Activated CD4-positive, alpha-beta T cell treated with anti-CD3 and anti-CD28 coated beads for 36 hours (primary cell): ENCODE measurements at regions of chr5 and their contacts with region 1.

Region 1: DNA sequence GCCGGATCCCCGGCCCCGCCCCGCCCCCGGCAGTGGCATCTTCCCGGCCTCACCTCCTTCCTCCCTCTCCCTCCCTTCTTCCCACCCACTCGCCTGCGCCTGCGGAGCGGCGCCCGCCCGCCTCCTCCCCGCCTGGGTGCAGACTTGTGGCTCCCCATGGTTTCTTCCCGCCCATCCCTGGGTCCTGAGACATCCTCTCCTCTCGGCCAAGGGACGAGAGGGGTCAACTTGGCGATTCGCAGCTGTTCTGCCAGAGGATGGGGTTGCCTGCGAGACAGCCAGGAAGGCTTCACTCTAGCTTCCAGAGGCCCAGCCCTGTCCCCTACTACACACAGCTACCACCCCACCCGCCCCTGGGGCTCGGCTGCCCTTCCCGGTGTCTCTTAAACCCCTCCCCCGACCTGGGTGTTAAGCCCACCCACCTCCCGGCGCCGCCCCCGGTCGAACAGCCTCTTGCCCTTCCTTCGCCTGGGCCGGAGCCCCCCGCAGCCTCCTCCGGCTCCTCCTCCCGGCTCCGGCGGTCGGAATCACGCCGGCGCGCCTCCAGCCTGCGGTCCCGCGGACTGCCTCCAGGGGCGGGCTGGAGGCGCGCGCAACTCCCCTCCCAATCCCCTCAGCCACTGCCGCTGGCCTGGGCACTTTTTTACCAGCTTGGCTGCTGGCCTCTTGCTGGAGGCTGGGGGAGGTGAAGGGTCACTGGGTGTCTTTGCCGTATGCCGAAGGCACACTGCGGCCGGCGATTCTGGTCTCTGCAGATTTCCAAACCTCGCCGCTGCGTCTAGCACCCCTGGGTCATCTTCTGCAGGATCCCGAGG is 1.9 kb downstream of the JADE2 start:
- DNase-seq: peak; percentile 87
- ATAC-seq: peak; percentile 51
- H3K4me3 Mint-ChIP-seq: peak overlapping the region; percentile 99
- H3K27ac Mint-ChIP-seq: peak overlapping the region; percentile 89
- H3K4me1 Mint-ChIP-seq: peaks cover 49% of the 10 kb centered on the region
- H3K27me3 Mint-ChIP-seq: no peaks in the 10 kb centered on the region

Region 2: DNA sequence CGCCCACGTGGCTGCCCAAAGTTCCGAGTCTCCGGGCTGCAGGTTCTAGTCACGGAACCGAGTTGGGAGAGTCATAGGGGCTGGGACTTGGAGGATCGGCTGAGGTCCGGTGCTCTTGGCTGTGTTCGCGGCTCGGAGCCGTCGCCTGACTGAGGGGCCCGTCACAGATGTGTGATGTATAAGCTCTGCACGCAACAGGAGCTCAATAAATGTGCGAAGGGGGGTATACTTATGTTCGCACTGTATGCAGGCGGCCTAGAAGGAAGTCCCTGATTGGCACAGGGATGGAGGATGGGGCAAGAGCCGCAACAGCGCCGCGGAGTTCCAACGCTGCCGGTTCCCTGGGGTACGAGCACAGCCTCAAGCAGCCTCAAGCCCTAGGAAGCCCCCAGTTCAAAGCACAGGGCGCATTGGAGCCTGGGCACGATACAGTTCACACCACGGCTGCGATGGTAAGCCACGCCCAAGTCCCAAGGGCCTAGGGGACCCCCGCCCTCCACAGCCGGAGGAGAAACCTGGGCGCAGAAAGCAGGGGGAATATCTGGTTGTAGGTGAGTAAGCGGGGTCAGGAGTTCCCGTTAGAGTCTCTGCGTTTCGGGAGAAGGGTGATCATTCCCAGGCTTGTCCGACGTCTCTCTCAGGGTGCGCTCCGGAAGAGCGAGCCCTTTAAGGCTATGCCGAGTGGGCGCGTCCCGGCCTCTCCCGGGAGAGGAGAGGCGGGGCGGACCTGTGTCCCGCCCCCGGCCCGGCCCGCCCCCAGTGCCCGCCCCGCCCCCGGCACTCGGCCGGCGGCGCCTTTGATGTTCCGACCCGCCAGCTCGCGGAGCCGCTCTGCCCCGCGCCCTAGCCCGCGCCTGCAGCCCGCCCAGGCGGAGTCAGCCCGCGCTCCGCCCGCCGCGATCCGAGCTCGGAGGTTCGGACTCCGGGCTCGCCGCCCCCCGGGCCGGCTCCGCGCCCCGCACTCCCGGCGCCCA is 413.2 kb before region 1 on chr5 and contains the start of gene TCF7:
- CTCF ChIA-PET with region 1: no interaction called
- POLR2A ChIA-PET with region 1: no interaction called
- intact Hi-C with region 1: loop called in 1 of 2 experiments (anchors 5 kb)
- DNase-seq: peak; percentile 88
- ATAC-seq: peak; percentile 40
- H3K4me3 Mint-ChIP-seq: peak within 1 kb of the TSS; percentile 85
- H3K27ac Mint-ChIP-seq: peak within 1 kb of the TSS; percentile 97
- H3K4me1 Mint-ChIP-seq: peaks cover 61% of the 10 kb centered on the region
- H3K27me3 Mint-ChIP-seq: no peaks in the 10 kb centered on the region
- total RNA-seq, gene TCF7: 94.8 to 117 TPM

Region 3: DNA sequence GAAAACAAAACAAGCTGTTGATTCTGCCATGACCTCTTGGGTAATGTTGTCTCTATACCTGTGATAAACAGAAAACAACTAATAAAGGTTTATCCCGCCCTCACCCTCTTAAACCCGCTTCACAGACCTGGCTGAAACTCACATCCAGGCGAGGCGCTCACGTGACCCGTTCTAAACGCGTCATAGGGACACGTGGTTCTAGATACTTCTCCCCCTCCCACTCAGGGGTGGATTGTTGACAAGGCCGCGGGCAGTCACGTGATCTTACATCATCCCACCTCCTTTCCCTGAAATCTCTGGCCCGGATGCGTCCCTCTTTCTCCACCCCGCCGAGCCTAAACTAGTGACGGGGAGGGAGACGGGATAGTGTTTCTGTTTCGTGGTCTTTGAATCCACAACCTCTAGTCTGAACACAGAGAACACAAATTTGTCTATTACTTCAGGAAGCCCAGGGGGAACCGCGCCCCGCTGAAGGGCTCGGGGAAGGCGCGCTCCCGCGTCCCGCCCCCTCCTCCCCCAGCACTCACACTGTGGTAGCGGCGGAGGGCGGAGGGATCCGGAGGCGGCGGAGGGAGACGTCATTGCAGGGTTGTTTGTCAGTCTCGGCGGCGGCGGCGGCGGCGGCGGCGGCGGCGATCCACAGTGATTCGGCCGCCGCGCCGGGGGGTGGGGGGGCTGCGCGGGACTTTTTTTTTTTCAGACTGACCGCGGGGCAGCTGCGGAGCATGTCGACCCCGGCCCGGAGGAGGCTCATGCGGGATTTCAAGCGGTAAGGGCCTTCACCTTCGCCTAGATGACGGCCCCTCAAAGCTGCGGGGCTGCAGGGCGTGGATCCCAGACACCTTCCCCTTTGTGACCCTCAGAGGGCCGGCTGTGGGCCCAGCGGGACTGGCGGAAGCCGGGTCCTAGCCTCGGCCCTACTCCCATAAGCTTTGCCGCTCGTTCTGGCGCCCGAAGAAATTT is 156.2 kb before region 1 on chr5 and contains the start of gene UBE2B:
- CTCF ChIA-PET with region 1: interaction called, 3 read pairs
- POLR2A ChIA-PET with region 1: interaction called, 4 read pairs
- intact Hi-C with region 1: loop called (anchors 1 kb)
- DNase-seq: peak; percentile 98
- ATAC-seq: peak; percentile 72
- H3K4me3 Mint-ChIP-seq: peak within 1 kb of the TSS; percentile 99
- H3K27ac Mint-ChIP-seq: peak within 1 kb of the TSS; percentile 99
- H3K4me1 Mint-ChIP-seq: peaks cover 53% of the 10 kb centered on the region
- H3K27me3 Mint-ChIP-seq: no peaks in the 10 kb centered on the region
- total RNA-seq, gene UBE2B: 112 to 115 TPM

Region 4: GRCh38 chr5:134458234-134459012 is 68.9 kb before region 1 on chr5:
- CTCF ChIA-PET with region 1: no interaction called
- POLR2A ChIA-PET with region 1: no interaction called
- intact Hi-C with region 1: no loop called
- DNase-seq: no peak
- ATAC-seq: no peak
- H3K4me3 Mint-ChIP-seq: no peak overlapping the region
- H3K27ac Mint-ChIP-seq: no peak overlapping the region
- H3K4me1 Mint-ChIP-seq: no peaks in the 10 kb centered on the region
- H3K27me3 Mint-ChIP-seq: no peaks in the 10 kb centered on the region

Region 5: DNA sequence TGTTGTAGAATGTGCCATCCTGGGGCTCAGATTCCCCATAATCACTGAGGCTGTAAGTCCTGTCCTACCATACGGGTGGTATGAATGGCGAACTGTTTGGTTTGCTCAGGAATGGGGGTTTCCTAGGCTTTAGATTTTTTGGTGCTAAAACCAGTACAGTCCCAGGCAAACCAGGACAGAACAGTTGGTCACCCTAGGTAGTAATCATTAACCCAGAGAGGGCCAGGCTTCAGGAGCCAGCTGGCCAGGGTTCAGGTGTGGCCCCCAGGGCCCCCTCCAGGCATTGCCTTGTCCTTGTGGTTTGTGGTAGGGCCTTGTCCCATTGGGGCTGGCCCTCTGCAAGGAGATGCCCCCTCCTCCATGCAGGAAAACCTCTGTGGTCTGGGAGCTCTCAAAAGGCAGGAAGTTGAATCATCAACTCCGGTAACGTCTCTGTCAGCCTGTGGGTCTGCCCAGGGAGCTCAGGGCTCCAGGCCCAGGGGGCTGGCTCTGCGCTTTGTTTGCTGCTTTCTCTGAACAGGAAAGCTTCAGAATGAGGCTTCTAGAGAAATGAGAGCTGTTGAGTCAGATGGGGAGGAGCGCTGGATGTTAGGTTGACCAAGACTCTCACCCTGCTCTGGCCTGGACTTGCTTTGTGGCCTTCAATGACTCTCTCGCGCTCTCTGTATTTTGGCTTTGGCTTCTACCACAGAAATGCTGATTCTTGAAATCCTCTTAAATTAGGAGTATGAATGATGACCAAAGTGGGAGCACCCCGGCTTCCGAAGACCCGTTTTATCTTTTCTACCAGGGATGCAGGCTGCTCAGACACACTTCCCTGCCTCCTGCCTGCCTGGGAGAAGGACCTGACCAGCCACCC is 24.0 kb before region 1 on chr5:
- CTCF ChIA-PET with region 1: interaction called, 3 read pairs
- POLR2A ChIA-PET with region 1: interaction called, 4 read pairs
- intact Hi-C with region 1: loop called (anchors 1 to 2 kb)
- DNase-seq: peak; percentile 89
- ATAC-seq: peak; percentile 98
- H3K4me3 Mint-ChIP-seq: peak overlapping the region; percentile 34
- H3K27ac Mint-ChIP-seq: peak overlapping the region; percentile 93
- H3K4me1 Mint-ChIP-seq: peaks cover 29% of the 10 kb centered on the region
- H3K27me3 Mint-ChIP-seq: no peaks in the 10 kb centered on the region

Region 6: DNA sequence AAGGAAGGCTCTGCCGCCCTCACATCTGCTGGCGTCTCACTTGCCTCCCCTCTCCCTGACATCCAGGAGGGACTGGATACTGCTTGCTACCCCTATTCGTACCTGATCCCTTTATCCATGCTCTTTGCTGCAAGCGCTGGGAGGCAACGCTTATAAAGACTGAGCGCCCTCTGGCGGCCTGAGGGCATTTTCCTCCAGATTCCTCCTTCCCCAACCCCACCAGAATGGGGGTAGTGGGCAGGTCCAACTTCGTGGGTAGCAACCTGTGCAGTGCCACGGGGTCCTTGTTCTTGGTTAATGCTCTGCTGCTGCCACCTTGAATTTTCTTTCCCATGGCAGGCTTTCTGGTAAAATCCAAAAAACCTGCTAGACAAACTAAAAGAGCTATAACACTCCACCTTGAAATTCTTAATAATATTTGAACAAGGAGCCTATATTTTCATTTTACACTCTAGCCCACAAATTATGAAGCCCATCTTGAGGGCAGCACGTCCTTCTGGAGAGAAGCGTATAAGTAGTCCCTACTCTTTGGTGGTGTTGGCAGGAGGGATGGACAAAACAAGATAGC is 50.5 kb after region 1 on chr5:
- CTCF ChIA-PET with region 1: interaction called, 14 read pairs
- POLR2A ChIA-PET with region 1: no interaction called
- intact Hi-C with region 1: loop called (anchors 1 to 5 kb)
- DNase-seq: peak; percentile 90
- ATAC-seq: peak; percentile 83
- H3K4me3 Mint-ChIP-seq: no peak overlapping the region
- H3K27ac Mint-ChIP-seq: peak overlapping the region; percentile 25
- H3K4me1 Mint-ChIP-seq: peaks cover 9% of the 10 kb centered on the region
- H3K27me3 Mint-ChIP-seq: no peaks in the 10 kb centered on the region

Region 7: DNA sequence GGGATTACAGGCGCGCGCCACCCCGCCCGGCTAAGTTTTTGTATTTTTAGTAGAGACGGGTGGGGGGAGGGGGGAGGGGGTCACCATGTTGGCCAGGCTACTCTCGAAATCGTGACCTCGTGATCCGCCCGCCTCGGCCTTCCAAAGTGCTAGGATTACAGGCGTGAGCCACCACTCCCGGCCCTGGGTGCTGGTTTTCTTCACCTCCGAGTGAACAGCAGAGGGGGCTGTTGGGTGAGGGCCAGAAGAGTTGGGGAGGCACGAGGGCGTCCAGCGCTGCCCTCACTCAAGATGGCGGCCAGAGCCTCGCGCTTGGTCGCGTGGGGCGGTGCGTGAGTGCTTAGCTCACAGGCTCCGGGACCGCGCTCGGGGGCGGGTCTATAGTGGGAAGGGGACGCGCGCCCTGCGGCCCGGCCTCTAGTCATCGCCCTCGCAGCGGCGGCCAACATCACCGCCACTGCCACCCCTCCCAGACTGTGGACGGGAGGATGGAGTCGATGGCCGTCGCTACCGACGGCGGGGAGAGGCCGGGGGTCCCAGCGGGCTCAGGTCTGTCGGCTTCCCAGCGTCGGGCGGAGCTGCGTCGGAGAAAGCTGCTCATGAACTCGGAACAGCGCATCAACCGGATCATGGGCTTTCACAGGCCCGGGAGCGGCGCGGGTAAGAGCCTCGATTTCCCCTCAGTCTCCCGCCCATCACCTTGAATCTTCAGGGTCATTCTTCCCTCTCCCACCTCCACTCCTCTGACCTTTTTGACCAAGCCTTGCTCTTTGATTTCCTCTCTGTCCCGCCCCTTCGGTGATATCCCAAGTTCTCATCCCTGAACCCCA is 211.0 kb after region 1 on chr5 and contains the start of gene CAMLG:
- CTCF ChIA-PET with region 1: interaction called, 3 read pairs
- POLR2A ChIA-PET with region 1: no interaction called
- intact Hi-C with region 1: loop called in 1 of 2 experiments (anchors 1 kb)
- DNase-seq: peak; percentile 99
- ATAC-seq: peak; percentile 97
- H3K4me3 Mint-ChIP-seq: peak within 1 kb of the TSS; percentile 94
- H3K27ac Mint-ChIP-seq: peak within 1 kb of the TSS; percentile 95
- H3K4me1 Mint-ChIP-seq: peaks cover 27% of the 10 kb centered on the region
- H3K27me3 Mint-ChIP-seq: no peaks in the 10 kb centered on the region
- total RNA-seq, gene CAMLG: 19.8 to 35.2 TPM